ENCODE measurements at regions of chr2 and their contacts with region 1.

Region 1: GRCh38 chr2:86440631-86441391 is at the start of gene KDM3A:
- DNase-seq: peak; percentile 98
- ATAC-seq: peak; percentile 91
- H3K4me3 ChIP-seq: peak within 1 kb of the TSS; percentile 64 to 69
- H3K27ac ChIP-seq: peak within 1 kb of the TSS; percentile 84
- H3K4me1 ChIP-seq: peaks cover 9 to 21% of the 10 kb centered on the region in 2 experiments
- H3K27me3 ChIP-seq: no peaks in the 10 kb centered on the region
- CTCF ChIP-seq: no peak
- POLR2A ChIP-seq: peak; percentile 82
- RAD21 ChIP-seq: no peak
- total RNA-seq, gene KDM3A: 52.6 TPM

Region 2: DNA sequence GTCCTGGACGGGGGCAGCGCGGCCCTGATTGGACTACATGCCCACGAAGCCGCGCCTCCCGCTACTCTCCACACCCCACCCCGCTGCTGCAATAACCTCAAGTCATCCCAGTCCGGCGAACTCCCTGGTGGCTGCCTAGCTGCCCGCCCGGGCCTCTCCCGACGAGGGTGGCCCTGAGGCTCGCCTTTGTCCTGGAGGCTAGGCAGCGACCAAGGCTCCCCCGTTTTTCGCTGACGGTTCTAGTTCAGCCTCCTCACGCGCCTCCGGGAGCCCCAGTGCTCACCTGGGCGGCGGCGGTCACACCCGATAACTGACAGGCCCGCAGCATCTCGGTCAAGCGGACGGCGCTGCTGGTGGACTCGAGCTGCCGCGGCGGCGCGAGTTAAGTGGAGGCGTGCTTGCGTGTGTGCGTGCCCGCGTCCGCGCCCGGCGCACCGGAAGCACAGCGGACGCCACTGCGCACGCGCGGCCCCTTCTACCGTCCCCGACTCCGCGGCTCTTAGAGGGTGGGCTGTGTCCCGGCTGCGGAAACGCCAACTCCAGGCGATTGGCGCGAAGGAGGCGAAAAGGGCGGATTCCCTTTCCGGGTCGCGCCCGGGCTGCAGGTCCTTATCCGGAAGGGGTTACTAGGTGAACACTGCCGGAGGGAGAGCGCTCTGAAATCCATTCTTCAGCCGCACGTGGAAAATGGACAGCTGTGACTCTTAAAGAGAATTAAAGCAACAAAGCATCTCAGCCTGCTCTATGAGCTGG is 245.6 kb before region 1 on chr2 and contains the start of gene IMMT:
- CTCF ChIA-PET with region 1: no interaction called
- POLR2A ChIA-PET with region 1: interaction called, 8 read pairs
- RAD21 ChIA-PET with region 1: no interaction called
- intact Hi-C with region 1: loop called (anchors 5 kb)
- DNase-seq: peak; percentile 91
- ATAC-seq: peak; percentile 90
- H3K4me3 ChIP-seq: peak within 1 kb of the TSS; percentile 85 to 93
- H3K27ac ChIP-seq: peak within 1 kb of the TSS; percentile 97
- H3K4me1 ChIP-seq: peaks cover 12 to 31% of the 10 kb centered on the region in 2 experiments
- H3K27me3 ChIP-seq: no peaks in the 10 kb centered on the region
- CTCF ChIP-seq: no peak
- POLR2A ChIP-seq: peak; percentile 76
- RAD21 ChIP-seq: no peak
- total RNA-seq, gene IMMT: 125 TPM

Region 3: GRCh38 chr2:86323273-86324021 is 117.4 kb before region 1 on chr2:
- CTCF ChIA-PET with region 1: no interaction called
- POLR2A ChIA-PET with region 1: no interaction called
- RAD21 ChIA-PET with region 1: no interaction called
- intact Hi-C with region 1: no loop called
- DNase-seq: no peak
- ATAC-seq: no peak
- H3K4me3 ChIP-seq: no peak overlapping the region
- H3K27ac ChIP-seq: no peak overlapping the region
- H3K4me1 ChIP-seq: no peaks in the 10 kb centered on the region
- H3K27me3 ChIP-seq: no peaks in the 10 kb centered on the region
- CTCF ChIP-seq: no peak
- POLR2A ChIP-seq: no peak
- RAD21 ChIP-seq: no peak

Region 4: DNA sequence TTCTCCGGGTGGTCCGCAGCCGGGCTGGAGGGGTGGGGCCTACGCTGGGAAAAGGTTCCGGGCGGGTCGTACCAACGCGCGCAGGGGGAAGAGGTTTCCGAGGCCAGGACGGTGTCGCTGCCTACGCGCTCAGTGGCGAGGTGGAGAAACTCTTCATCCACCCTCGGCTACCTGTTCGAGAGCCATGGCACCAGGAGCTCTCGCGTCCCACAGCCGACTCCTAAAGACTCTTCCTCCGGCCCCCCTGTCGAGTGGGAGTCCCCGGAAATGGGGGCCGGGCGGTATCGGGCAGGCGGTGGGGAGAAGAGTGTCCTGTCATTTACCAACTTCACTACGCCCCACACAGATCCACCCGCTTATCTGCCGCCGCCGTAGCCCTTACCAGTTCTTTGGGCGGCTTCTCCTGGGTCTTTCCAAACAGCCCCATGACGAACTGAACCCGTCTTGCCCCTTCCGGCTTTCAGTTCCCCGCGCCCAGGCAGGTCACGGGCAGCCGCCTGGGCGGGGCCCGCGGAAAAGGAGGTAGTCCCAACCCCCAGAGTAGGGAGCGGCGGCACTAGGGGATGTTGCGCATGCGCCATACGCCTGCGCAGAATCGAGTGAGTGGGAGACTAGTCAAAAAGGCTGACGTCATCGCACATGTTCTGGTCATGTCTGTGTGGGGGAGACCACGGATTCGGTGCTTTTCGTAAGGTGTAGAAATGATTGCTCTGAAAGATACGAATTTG is 122.3 kb after region 1 on chr2 and contains the start of gene CHMP3:
- CTCF ChIA-PET with region 1: no interaction called
- POLR2A ChIA-PET with region 1: interaction called, 3 read pairs
- RAD21 ChIA-PET with region 1: no interaction called
- intact Hi-C with region 1: loop called (anchors 5 kb)
- DNase-seq: peak; percentile 92
- ATAC-seq: peak; percentile 94
- H3K4me3 ChIP-seq: peak within 1 kb of the TSS; percentile 58 to 74
- H3K27ac ChIP-seq: peak within 1 kb of the TSS; percentile 77
- H3K4me1 ChIP-seq: peaks cover 0 to 16% of the 10 kb centered on the region in 2 experiments; a peak in 2 of 4 replicates
- H3K27me3 ChIP-seq: no peaks in the 10 kb centered on the region
- CTCF ChIP-seq: no peak
- POLR2A ChIP-seq: peak; percentile 69
- RAD21 ChIP-seq: no peak
- total RNA-seq, gene CHMP3: 63.4 TPM

Region 5: DNA sequence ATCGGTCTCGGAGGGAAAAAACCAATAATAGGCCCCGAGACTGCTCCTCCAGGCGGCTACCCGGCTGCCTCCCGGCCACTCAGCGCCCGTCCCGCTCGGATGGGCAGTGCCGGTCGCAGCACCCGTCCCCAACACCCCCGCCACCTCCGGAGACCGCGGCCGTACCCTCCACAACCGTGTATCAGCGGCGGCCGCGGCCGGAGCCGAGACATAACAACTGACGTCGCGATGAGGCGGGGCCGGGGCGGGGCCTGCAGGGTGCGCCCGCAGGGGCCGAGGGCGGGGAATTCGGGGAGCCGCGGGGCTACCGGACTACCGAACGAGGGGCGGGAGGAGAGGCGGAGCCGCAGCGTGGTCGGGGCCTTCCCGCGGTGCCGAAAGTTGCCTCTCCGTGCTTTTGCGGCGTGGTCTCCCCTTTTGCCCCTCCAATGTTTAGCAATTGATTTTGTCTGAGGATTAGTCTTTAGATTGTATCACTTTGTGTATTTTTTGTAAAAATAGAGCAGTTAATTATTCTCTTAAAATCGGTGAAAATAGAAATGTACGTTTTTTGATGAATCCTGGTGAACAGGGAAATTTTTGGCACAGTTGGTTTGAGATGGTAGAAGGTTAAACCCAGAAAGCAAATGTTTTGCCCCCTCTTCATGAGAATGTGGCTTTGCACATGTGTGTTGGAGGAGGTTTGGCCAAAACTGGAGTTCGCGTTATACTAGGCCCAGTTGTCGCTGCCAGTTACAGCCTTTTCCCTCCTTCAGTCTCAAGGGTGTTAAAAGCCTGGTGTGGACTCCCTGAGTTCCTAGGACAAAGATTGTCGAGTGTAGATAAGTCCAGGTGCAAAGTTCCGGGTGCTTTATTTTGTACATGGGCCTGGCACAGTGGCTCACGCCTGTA is 183.1 kb after region 1 on chr2 and contains the start of gene RNF103:
- CTCF ChIA-PET with region 1: no interaction called
- POLR2A ChIA-PET with region 1: no interaction called
- RAD21 ChIA-PET with region 1: no interaction called
- intact Hi-C with region 1: loop called (anchors 5 kb)
- DNase-seq: peak; percentile 71
- ATAC-seq: peak; percentile 90
- H3K4me3 ChIP-seq: peak within 1 kb of the TSS; percentile 56 to 74
- H3K27ac ChIP-seq: peak within 1 kb of the TSS; percentile 90
- H3K4me1 ChIP-seq: peaks cover 16 to 23% of the 10 kb centered on the region in 2 experiments
- H3K27me3 ChIP-seq: no peaks in the 10 kb centered on the region
- CTCF ChIP-seq: no peak
- POLR2A ChIP-seq: peak; percentile 67
- RAD21 ChIP-seq: no peak
- total RNA-seq, gene RNF103: 16.1 TPM